Aorta (tissue), 5 donors: ENCODE measurements at regions of chr11 and their contacts with region 1.

Region 1: DNA sequence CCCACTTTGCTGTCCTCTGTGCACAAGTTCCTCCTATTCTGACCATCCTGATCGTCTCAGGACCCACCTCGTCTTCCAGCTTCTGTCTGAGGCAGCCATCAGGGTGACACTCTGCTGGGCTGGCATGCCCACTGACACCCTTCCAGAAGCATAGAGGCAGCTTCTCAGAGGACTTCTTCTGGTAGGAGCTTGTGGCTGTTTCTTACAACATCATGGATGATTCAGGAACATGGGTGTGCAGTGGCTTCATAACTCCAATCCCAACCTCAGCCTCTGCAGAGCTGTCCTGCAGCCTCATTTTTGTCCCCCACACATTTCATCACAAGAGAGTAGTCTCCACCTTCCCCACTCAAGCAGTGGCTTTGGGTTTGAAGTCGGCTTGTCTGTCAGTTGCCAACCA is 20.9 kb upstream of the CTR9 start:
- DNase-seq: no peak
- ATAC-seq: no peak
- H3K4me3 ChIP-seq: no peak overlapping the region
- H3K27ac ChIP-seq: no peak overlapping the region
- H3K4me1 ChIP-seq: peaks cover 0 to 2% of the 10 kb centered on the region in 2 donors
- H3K27me3 ChIP-seq: no peaks in the 10 kb centered on the region

Region 2: DNA sequence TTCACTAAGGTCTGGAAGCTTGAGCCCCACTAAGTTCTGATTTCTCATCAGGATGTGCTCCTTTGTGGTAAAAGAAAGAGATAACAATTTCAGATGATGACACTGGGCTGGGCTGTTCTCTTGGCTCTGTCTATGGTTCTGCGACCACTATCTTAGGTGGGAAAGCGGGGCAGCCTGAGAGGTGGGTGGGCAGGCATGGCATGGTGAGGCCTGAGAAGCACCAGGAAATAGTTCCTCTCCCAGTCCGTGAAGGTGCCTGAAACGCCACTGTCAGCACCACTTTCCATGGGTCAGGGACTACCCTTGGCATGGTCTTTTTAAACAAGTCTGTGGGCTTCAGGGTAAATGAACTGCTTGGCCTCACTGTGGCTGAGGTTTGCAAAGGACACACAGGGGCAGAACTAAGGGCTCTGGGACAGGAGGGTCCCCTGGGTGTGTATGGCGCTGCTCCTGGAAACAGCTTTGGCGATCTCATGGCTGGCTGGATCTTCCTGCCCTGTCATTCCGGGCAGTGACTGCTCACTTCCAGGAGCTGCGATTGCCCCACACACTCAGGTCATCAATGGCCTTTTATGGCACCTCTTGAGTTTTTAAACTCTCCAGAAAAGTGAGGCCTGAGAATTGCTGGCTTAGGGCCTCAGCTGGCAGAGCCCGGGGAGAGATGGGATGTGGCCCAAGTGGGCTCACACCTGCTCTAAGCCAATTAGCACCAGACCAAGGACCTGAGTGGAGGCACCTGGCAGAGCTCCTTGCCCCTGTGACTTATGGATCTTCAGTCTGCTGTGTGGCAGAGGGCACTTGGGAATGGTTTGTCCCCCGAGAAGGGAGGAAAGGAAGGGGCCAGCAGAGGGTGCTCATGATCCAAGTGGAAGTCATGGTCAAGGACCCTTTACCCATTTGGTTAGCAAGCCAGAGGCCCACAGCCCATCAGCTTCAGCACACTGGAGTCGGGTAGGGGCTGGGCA is 106.1 kb before region 1 on chr11:
- intact Hi-C with region 1: loop called (anchors 5 to 10 kb)
- DNase-seq: no peak
- ATAC-seq: peak; percentile 54
- H3K4me3 ChIP-seq: no peak overlapping the region
- H3K27ac ChIP-seq: peak overlapping the region; percentile 62 to 74
- H3K4me1 ChIP-seq: peaks cover 0 to under 1% of the 10 kb centered on the region in 2 donors
- H3K27me3 ChIP-seq: no peaks in the 10 kb centered on the region

Region 3: GRCh38 chr11:10688401-10688800 is 41.8 kb before region 1 on chr11:
- intact Hi-C with region 1: loop called (anchors 5 kb)
- DNase-seq: no peak
- ATAC-seq: no peak
- H3K4me3 ChIP-seq: peak overlapping the region; percentile 39 to 61
- H3K27ac ChIP-seq: peak overlapping the region in 1 of 2 donors; percentile 53
- H3K4me1 ChIP-seq: peaks cover 5 to 8% of the 10 kb centered on the region in 2 donors
- H3K27me3 ChIP-seq: no peaks in the 10 kb centered on the region

Region 4: DNA sequence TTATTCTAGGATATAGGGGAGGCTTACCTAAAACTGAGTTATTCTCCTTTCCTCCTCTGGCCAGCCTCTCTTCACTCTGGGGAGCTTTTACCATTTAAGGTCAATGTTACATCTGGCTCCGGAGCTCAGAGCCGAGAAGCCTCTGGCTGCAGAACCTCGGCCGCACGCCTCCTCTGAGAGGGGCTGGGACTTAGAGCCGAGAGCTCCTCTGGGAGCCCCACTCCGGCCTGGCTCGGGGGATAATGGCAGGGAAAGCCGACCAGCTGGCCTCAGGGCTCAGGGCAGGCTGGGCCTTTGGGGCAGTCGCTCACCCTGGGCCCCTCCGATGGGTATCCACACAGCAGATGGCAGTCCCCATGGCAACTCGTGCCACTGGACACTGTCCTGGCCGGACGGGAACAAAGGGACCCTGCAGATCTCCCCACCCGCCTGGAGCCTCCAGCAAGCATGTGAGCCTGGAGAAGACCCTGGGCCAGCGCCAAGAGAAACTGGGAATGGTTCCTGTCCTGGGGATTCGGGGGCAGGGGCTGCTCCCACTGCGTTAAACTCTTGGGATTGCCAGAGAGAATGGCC is 36.6 kb before region 1 on chr11 and contains the start of gene IRAG1:
- intact Hi-C with region 1: loop called (anchors 5 kb)
- DNase-seq: peak; percentile 87 to 92
- ATAC-seq: peak; percentile 82
- H3K4me3 ChIP-seq: peak within 1 kb of the TSS; percentile 87 to 98
- H3K27ac ChIP-seq: peak within 1 kb of the TSS; percentile 92 to 99
- H3K4me1 ChIP-seq: peaks cover 0 to 8% of the 10 kb centered on the region in 2 donors
- H3K27me3 ChIP-seq: no peaks in the 10 kb centered on the region
- total RNA-seq, gene IRAG1: 189 to 518 TPM